Mammary epithelial cell (primary cell): ENCODE measurements at regions of chr2 and their contacts with region 1.

Region 1: GRCh38 chr2:14978836-14979235 is 346.3 kb downstream of the LRATD1 start:
- DNase-seq: peak; percentile 24
- H3K4me3 ChIP-seq: no peak overlapping the region
- H3K27ac ChIP-seq: no peak overlapping the region
- H3K4me1 ChIP-seq: no peaks in the 10 kb centered on the region
- H3K27me3 ChIP-seq: no peaks in the 10 kb centered on the region
- CTCF ChIP-seq: no peak

Region 2: GRCh38 chr2:14872779-14873325 is 106.0 kb before region 1 on chr2:
- CTCF ChIA-PET with region 1: no interaction called
- dilution Hi-C with region 1: no loop called
- in situ Hi-C with region 1: no loop called
- intact Hi-C with region 1: no loop called
- DNase-seq: no peak
- H3K4me3 ChIP-seq: no peak overlapping the region
- H3K27ac ChIP-seq: no peak overlapping the region
- H3K4me1 ChIP-seq: no peaks in the 10 kb centered on the region
- H3K27me3 ChIP-seq: no peaks in the 10 kb centered on the region
- CTCF ChIP-seq: no peak

Region 3: DNA sequence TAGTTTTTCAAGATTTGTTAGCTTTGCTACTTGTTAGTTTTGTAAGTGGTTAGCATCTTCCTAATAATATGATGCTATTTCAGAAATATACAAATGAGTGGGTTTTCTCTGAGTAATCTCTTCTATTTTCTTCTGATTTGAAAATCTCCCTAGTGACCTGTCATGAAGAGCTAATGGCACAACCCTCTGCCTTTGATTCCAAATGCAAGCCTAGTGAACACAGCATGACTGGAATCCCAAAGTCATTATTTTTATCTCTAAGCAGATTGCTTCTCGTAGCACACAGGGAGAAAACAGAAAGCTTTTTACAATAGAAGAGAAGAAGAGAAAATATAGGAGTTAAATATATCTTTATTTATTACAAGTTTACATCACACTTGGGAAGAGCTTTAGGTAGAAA is 50.8 kb before region 1 on chr2:
- CTCF ChIA-PET with region 1: no interaction called
- dilution Hi-C with region 1: no loop called
- in situ Hi-C with region 1: no loop called
- intact Hi-C with region 1: loop called (anchors 2 kb)
- DNase-seq: no peak
- H3K4me3 ChIP-seq: no peak overlapping the region
- H3K27ac ChIP-seq: no peak overlapping the region
- H3K4me1 ChIP-seq: no peaks in the 10 kb centered on the region
- H3K27me3 ChIP-seq: no peaks in the 10 kb centered on the region
- CTCF ChIP-seq: no peak

Region 4: DNA sequence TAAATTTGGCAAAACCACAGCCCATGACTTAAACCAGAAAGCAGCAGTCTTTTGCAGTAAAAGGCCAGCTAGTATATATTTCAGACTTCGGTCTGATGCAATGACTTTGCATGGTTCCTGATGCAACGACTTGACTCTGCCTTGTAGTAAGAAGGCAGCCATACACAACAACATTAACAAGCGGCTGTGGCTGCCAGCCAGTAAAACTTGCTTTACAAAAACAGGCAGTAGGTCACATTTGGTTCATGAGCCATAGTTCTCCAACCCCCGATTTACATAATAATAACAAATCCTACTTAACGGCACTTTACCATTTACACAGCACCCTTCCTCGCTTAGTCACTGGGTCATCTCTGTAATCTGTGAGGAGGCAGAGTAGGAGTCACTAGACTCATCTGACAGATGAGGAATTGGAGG is 64.0 kb after region 1 on chr2:
- CTCF ChIA-PET with region 1: no interaction called
- dilution Hi-C with region 1: no loop called
- in situ Hi-C with region 1: no loop called
- intact Hi-C with region 1: no loop called
- DNase-seq: no peak
- H3K4me3 ChIP-seq: no peak overlapping the region
- H3K27ac ChIP-seq: no peak overlapping the region
- H3K4me1 ChIP-seq: no peaks in the 10 kb centered on the region
- H3K27me3 ChIP-seq: no peaks in the 10 kb centered on the region
- CTCF ChIP-seq: no peak